Activated CD4-positive, alpha-beta T cell treated with anti-CD3 and anti-CD28 coated beads for 36 hours (primary cell): ENCODE measurements at regions of chr16 and their contacts with region 1.

Region 1: DNA sequence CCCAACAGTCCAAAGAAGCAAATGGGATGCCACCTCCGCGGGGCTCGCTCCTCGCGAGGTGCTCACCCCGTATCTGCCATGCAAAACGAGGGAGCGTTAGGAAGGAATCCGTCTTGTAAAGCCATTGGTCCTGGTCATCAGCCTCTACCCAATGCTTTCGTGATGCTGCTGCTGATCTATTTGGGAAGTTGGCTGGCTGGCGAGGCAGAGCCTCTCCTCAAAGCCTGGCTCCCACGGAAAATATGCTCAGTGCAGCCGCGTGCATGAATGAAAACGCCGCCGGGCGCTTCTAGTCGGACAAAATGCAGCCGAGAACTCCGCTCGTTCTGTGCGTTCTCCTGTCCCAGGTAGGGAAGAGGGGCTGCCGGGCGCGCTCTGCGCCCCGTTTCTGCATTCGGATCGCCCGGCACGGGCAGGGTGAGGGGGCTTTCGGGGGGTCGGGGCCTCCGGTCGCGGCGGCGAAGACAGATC is at the start of gene CDH13:
- DNase-seq: no peak
- ATAC-seq: no peak
- H3K4me3 Mint-ChIP-seq: no peak within 1 kb of the TSS
- H3K27ac Mint-ChIP-seq: no peak within 1 kb of the TSS
- H3K4me1 Mint-ChIP-seq: peaks cover 2% of the 10 kb centered on the region
- H3K27me3 Mint-ChIP-seq: peaks cover 65% of the 10 kb centered on the region
- total RNA-seq, gene CDH13: not detected

Region 2: DNA sequence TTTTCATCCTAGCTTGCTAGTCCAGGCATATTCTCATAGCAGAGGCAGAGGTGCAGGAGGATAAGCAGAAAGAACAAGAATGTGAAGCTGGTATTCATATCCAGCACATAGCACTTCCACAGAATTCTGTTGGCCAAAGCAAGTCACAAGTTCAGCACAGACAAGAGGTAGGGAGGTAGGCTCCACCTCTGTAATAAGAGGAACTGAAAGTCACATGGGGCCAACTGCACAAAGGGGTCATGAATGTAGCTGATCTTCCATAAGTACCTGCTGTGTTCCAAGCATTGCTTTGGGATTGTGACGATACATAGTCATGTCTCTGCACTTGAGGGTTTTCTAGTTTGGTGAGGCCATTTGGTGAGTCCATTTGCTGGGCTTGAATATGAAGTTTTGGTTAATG is 346.0 kb before region 1 on chr16:
- CTCF ChIA-PET with region 1: no interaction called
- POLR2A ChIA-PET with region 1: no interaction called
- intact Hi-C with region 1: loop called in 1 of 2 experiments (anchors 5 kb)
- DNase-seq: no peak
- ATAC-seq: no peak
- H3K4me3 Mint-ChIP-seq: no peak overlapping the region
- H3K27ac Mint-ChIP-seq: no peak overlapping the region
- H3K4me1 Mint-ChIP-seq: no peaks in the 10 kb centered on the region
- H3K27me3 Mint-ChIP-seq: no peaks in the 10 kb centered on the region

Region 3: DNA sequence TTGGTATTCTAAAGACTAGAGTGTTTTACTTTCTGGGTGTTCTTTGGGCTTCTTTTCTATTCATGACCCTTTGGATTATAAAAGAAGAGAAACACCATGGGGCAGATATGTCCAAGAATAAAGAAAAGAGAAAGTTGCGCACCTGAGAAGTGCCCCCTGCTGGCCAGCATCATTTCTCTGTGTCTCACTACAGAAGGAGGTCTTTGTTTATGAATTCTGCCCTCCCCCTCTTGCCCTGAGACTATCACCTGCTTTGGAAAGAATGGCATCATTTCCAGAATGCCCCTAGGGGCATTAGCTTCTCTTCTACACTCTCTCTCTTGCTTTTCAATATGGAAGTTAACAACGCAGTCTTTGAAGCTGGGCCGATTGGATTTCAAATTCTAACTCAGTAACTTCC is 44.9 kb after region 1 on chr16:
- CTCF ChIA-PET with region 1: interaction called, 5 read pairs
- POLR2A ChIA-PET with region 1: no interaction called
- intact Hi-C with region 1: loop called in 1 of 2 experiments (anchors 2 kb)
- DNase-seq: peak; percentile 63
- ATAC-seq: no peak
- H3K4me3 Mint-ChIP-seq: no peak overlapping the region
- H3K27ac Mint-ChIP-seq: no peak overlapping the region
- H3K4me1 Mint-ChIP-seq: no peaks in the 10 kb centered on the region
- H3K27me3 Mint-ChIP-seq: peaks cover 2% of the 10 kb centered on the region

Region 4: GRCh38 chr16:83215406-83216001 is 588.7 kb after region 1 on chr16:
- CTCF ChIA-PET with region 1: no interaction called
- POLR2A ChIA-PET with region 1: no interaction called
- intact Hi-C with region 1: loop called in 1 of 2 experiments (anchors 1 kb)
- DNase-seq: peak; percentile 79
- ATAC-seq: peak; percentile 16
- H3K4me3 Mint-ChIP-seq: no peak overlapping the region
- H3K27ac Mint-ChIP-seq: no peak overlapping the region
- H3K4me1 Mint-ChIP-seq: no peaks in the 10 kb centered on the region
- H3K27me3 Mint-ChIP-seq: no peaks in the 10 kb centered on the region